H1 (cell line): ENCODE measurements at regions of chr6 and their contacts with region 1.

Region 1: GRCh38 chr6:170554013-170554795 is at the start of gene TBP:
- DNase-seq: peak; percentile 93 to 97
- H3K4me3 ChIP-seq: peak within 1 kb of the TSS; percentile 98 to 99 (median 99)
- H3K27ac ChIP-seq: peak within 1 kb of the TSS; percentile 65
- H3K4me1 ChIP-seq: peaks cover 0 to 3% (median 0%) of the 10 kb centered on the region in 4 experiments; a peak in 3 of 7 replicates
- H3K27me3 ChIP-seq: no peaks in the 10 kb centered on the region
- CTCF ChIP-seq: no peak
- EP300 ChIP-seq: no peak
- POLR2A ChIP-seq: peak in 1 of 2 experiments; percentile 91; a peak in 2 of 3 replicates
- RAD21 ChIP-seq: no peak
- total RNA-seq, gene TBP: 17.9 and 20.9 TPM in 2 replicates

Region 2: DNA sequence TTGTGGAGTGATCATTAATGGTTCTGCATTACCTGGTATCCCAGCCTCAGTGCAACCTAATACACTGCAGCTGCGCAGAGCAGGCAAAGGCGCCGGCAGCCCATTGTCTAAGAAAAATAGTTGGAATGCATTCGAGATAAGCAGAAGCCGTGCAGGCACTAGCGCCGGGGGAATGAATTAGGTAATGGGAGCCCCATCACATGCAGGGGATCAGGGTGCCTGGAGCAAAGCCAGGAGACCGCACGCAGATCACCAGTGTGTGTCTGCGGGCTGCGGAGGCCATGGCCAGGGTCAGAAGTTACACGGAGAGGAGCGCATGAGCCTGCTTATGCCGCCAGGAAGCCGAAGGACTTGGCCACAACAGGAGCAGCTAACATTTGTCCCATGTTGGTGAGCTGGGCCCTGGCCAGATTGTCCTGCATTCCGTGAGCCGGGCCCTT is 420.2 kb before region 1 on chr6:
- CTCF ChIA-PET with region 1: no interaction called
- POLR2A ChIA-PET with region 1: no interaction called
- DNase-seq: peak in 1 of 2 experiments; percentile 29
- H3K4me3 ChIP-seq: no peak overlapping the region
- H3K27ac ChIP-seq: no peak overlapping the region
- H3K4me1 ChIP-seq: no peaks in the 10 kb centered on the region; a peak in 1 of 7 replicates
- H3K27me3 ChIP-seq: no peaks in the 10 kb centered on the region
- CTCF ChIP-seq: no peak
- EP300 ChIP-seq: no peak
- POLR2A ChIP-seq: no peak
- RAD21 ChIP-seq: no peak

Region 3: DNA sequence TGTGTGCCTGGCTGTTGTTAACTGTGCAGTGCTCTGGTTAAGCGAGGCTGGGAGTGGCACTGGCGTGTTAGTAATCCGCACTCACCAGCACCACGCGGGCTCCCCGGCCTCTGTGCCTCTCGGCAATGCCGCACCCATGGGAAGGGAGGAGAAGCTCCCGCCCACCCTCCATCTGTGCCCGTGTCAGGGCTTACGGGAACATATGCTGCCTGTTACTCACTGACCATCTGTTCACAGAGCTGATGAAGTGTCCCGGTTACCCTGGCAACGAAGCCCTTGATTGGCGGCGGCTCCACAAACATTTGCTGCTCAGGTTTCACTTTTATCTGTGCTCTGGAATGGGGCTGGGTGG is 115.8 kb before region 1 on chr6:
- CTCF ChIA-PET with region 1: no interaction called
- POLR2A ChIA-PET with region 1: no interaction called
- DNase-seq: peak; percentile 27 to 78
- H3K4me3 ChIP-seq: no peak overlapping the region
- H3K27ac ChIP-seq: 0 out of 2 replicates have a peak overlapping the region, but pooled peaks have one; percentile 55
- H3K4me1 ChIP-seq: peaks cover 0 to 18% (median 9%) of the 10 kb centered on the region in 4 experiments; a peak in 6 of 7 replicates
- H3K27me3 ChIP-seq: no peaks in the 10 kb centered on the region
- CTCF ChIP-seq: no peak
- EP300 ChIP-seq: no peak
- POLR2A ChIP-seq: no peak
- RAD21 ChIP-seq: no peak

Region 4: DNA sequence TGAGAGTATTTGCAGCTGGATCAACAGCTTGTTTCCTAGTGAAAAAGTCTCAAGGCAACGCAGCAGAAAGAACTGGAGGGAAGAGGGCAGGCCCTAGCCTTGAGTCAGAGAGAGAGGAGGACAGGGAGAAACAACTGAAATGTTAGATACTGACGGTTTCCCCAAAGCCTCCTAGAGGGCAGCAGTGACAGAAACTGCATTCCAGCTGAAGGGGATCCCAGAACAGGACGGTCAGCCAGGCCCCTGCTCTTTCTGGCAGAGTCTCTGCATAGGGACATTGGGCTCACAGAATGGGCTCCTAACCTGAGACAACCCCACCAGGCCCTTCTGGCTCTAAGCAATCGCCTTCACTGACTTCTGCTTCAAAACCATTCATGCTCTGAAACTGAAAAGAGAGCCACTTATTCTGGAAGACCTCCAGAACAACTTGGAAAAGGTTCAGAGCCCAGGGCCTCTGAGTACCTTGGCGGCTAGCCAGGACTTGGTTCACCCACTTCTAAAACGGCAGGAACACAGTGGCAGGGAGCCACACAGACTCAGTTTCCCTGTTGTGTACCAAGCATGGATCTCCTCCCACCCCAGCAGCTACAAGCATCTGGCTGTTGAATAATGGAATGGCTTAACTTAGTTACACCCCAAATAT is 74.0 kb before region 1 on chr6:
- CTCF ChIA-PET with region 1: no interaction called
- POLR2A ChIA-PET with region 1: no interaction called
- DNase-seq: peak in 1 of 2 experiments; percentile 2
- H3K4me3 ChIP-seq: no peak overlapping the region
- H3K27ac ChIP-seq: no peak overlapping the region
- H3K4me1 ChIP-seq: no peaks in the 10 kb centered on the region
- H3K27me3 ChIP-seq: no peaks in the 10 kb centered on the region; a peak in 1 of 7 replicates
- CTCF ChIP-seq: peak; percentile 33 to 62 (median 42)
- EP300 ChIP-seq: no peak
- POLR2A ChIP-seq: no peak
- RAD21 ChIP-seq: peak; percentile 40 to 55; a peak in 3 of 4 replicates

Region 5: GRCh38 chr6:170529839-170530469 is 24.2 kb before region 1 on chr6:
- CTCF ChIA-PET with region 1: interaction called, 12 read pairs
- POLR2A ChIA-PET with region 1: interaction called, 4 read pairs
- DNase-seq: peak in 1 of 2 experiments; percentile 82
- H3K4me3 ChIP-seq: no peak overlapping the region
- H3K27ac ChIP-seq: no peak overlapping the region
- H3K4me1 ChIP-seq: no peaks in the 10 kb centered on the region
- H3K27me3 ChIP-seq: no peaks in the 10 kb centered on the region
- CTCF ChIP-seq: peak; percentile 76 to 93 (median 83)
- EP300 ChIP-seq: no peak
- POLR2A ChIP-seq: no peak
- RAD21 ChIP-seq: peak; percentile 95 to 96

Region 6: GRCh38 chr6:170584181-170584953 is 30.2 kb after region 1 on chr6 and contains the start of gene PDCD2:
- CTCF ChIA-PET with region 1: interaction called, 7 read pairs
- POLR2A ChIA-PET with region 1: interaction called, 37 read pairs
- DNase-seq: peak; percentile 70 to 89
- H3K4me3 ChIP-seq: peak within 1 kb of the TSS; percentile 67 to 89 (median 82)
- H3K27ac ChIP-seq: peak within 1 kb of the TSS; percentile 73
- H3K4me1 ChIP-seq: peaks cover 2 to 6% (median 5%) of the 10 kb centered on the region in 4 experiments; a peak in 4 of 7 replicates
- H3K27me3 ChIP-seq: no peaks in the 10 kb centered on the region
- CTCF ChIP-seq: peak in 1 of 3 experiments; percentile 3; a peak in 1 of 4 replicates
- EP300 ChIP-seq: peak in 1 of 2 experiments; percentile 12; a peak in 1 of 3 replicates
- POLR2A ChIP-seq: peak in 1 of 2 experiments; percentile 71; a peak in 2 of 3 replicates
- RAD21 ChIP-seq: no peak; a peak in 1 of 4 replicates
- total RNA-seq, gene PDCD2: 104 and 116 TPM in 2 replicates